Caco-2 (cell line): ENCODE measurements at regions of chr7 and their contacts with region 1.

Region 1: GRCh38 chr7:142153400-142153799 is 41.9 kb downstream of the MGAM2 start:
- DNase-seq: peak; percentile 46 to 58
- H3K4me3 ChIP-seq: no peak overlapping the region
- H3K4me3 Mint-ChIP-seq: no peak overlapping the region
- H3K27ac Mint-ChIP-seq: no peak overlapping the region
- H3K4me1 ChIP-seq: peaks cover 23% of the 10 kb centered on the region
- H3K4me1 Mint-ChIP-seq: peaks cover 16% of the 10 kb centered on the region
- H3K27me3 ChIP-seq: no peaks in the 10 kb centered on the region
- H3K27me3 Mint-ChIP-seq: no peaks in the 10 kb centered on the region
- CTCF ChIP-seq: peak; percentile 34 to 79

Region 2: DNA sequence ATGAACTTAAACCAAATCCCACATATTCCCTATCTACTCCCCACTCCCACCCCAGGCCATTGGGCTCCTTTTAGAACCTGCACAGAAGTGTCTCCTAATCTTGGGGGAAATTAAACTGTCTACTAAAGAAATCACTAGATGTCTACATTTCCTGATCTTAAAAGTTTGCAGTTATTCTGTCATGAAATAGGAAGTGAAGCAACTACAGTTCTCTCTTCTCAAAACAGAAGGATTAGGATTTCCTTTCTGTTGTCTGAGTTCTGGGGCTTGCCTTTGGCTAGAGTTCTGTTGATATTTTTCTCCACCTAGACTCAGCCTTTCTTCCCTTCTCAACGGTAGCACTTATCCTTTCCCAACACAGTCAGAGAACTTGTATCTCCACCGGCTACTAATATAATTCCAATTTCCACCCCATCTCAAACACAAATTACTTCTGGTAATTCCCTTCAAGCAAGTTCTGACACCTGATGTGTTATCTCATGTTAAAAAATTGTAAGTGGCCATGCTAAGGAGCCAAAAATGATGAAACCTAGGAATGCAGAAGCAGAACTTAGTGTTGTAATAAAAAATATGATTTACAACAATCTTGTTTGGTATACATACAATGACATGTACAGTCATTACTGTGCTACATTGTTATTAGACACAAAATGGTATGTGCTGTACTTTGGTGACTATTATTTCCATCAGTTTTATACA is 225.1 kb before region 1 on chr7:
- CTCF ChIA-PET with region 1: no interaction called
- POLR2A ChIA-PET with region 1: no interaction called
- intact Hi-C with region 1: no loop called
- DNase-seq: no peak
- H3K4me3 ChIP-seq: no peak overlapping the region
- H3K4me3 Mint-ChIP-seq: no peak overlapping the region
- H3K27ac Mint-ChIP-seq: no peak overlapping the region
- H3K4me1 ChIP-seq: no peaks in the 10 kb centered on the region
- H3K4me1 Mint-ChIP-seq: no peaks in the 10 kb centered on the region
- H3K27me3 ChIP-seq: no peaks in the 10 kb centered on the region
- H3K27me3 Mint-ChIP-seq: peaks cover 7% of the 10 kb centered on the region
- CTCF ChIP-seq: no peak

Region 3: DNA sequence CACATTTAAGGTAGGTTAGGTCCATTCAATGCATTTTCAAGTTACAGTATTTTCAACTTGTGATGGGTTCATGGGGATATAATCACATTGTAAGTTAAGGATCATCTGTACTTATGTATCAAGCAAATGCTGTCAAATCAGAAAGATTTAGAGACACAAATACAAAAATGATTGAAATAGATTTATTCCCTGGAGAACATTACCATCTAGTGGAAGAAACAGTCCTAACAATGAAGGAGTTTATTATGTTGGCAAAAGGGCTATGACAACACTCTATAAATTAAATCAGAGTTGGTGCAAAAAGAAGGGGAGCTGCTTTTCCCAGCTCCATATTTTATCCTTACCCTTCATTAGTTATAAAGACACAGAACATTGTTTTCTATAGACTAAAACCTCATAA is 35.4 kb after region 1 on chr7:
- CTCF ChIA-PET with region 1: no interaction called
- POLR2A ChIA-PET with region 1: no interaction called
- intact Hi-C with region 1: loop called (anchors 1 kb)
- DNase-seq: peak in 1 of 2 experiments; percentile 19
- H3K4me3 ChIP-seq: no peak overlapping the region
- H3K4me3 Mint-ChIP-seq: no peak overlapping the region
- H3K27ac Mint-ChIP-seq: no peak overlapping the region
- H3K4me1 ChIP-seq: no peaks in the 10 kb centered on the region
- H3K4me1 Mint-ChIP-seq: peaks cover 6% of the 10 kb centered on the region
- H3K27me3 ChIP-seq: no peaks in the 10 kb centered on the region
- H3K27me3 Mint-ChIP-seq: no peaks in the 10 kb centered on the region
- CTCF ChIP-seq: peak; percentile 40 to 56

Region 4: GRCh38 chr7:142240546-142240945 is 87.1 kb after region 1 on chr7:
- CTCF ChIA-PET with region 1: no interaction called
- POLR2A ChIA-PET with region 1: no interaction called
- intact Hi-C with region 1: no loop called
- DNase-seq: no peak
- H3K4me3 ChIP-seq: no peak overlapping the region
- H3K4me3 Mint-ChIP-seq: no peak overlapping the region
- H3K27ac Mint-ChIP-seq: no peak overlapping the region
- H3K4me1 ChIP-seq: no peaks in the 10 kb centered on the region
- H3K4me1 Mint-ChIP-seq: no peaks in the 10 kb centered on the region
- H3K27me3 ChIP-seq: peaks cover 2% of the 10 kb centered on the region
- H3K27me3 Mint-ChIP-seq: peaks cover 42% of the 10 kb centered on the region
- CTCF ChIP-seq: no peak

Region 5: DNA sequence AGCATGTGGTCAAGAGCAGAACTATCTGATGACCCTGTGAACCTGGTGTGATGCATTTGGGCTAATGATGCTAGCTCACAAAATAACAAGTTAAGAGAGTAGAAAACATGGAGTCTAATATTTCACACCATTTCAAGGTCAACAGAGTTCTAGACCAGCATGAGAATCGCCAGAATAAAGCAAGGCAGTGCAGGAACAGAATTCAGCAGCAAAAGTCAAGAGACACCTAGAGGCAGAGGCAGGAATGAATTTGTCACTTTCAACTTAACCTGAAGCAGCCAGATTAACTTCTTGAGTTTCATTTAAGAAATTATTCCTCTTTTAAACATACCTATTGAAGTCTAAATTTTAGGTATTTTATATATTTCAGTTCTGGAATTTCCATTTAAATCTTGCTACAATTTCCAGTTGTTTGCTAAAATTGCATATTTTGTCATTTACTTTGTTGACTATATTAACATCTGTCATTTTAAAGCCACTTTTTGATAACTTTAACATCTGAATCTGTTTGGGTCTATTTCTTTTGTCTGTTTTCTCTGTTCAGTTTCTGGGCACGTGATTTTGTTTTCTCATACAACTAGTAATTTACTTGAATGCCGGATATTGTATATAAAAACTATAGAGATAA is 148.6 kb after region 1 on chr7:
- CTCF ChIA-PET with region 1: no interaction called
- POLR2A ChIA-PET with region 1: no interaction called
- intact Hi-C with region 1: loop called (anchors 1 kb)
- DNase-seq: peak in 1 of 2 experiments; percentile 18
- H3K4me3 ChIP-seq: no peak overlapping the region
- H3K4me3 Mint-ChIP-seq: no peak overlapping the region
- H3K27ac Mint-ChIP-seq: no peak overlapping the region
- H3K4me1 ChIP-seq: no peaks in the 10 kb centered on the region
- H3K4me1 Mint-ChIP-seq: no peaks in the 10 kb centered on the region
- H3K27me3 ChIP-seq: no peaks in the 10 kb centered on the region; the same call in 1 of the 2 replicates
- H3K27me3 Mint-ChIP-seq: peaks cover 19% of the 10 kb centered on the region
- CTCF ChIP-seq: peak; percentile 56 to 68